Right ventricle myocardium inferior (tissue), 1 donor: ENCODE measurements at regions of chrX and their contacts with region 1.

Region 1: GRCh38 chrX:106894392-106894909 is 8.7 kb downstream of the RIPPLY1 start:
- DNase-seq: no peak
- ATAC-seq: peak; percentile 79

Region 2: GRCh38 chrX:106619797-106620196 is 274.7 kb before region 1 on chrX:
- intact Hi-C with region 1: no loop called
- DNase-seq: no peak
- ATAC-seq: no peak

Region 3: DNA sequence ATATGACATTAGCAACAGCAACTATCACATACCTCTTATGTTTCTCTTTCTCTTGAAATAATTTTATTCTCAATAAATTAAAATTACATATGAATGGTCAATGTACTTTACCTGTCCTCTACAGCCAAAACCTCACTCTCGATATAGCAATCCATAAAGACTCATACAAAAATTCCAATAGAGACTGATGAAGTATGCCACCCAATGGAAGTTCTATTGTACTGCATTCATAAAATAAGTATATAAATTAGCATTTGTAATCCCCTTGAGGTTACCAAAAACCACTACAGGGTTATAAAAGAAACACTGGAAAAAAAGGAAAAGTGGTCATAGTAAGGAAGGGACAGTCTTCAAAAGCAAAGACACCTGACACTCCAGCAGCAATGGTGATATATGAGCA is 58.5 kb after region 1 on chrX:
- intact Hi-C with region 1: loop called (anchors 5 kb)
- DNase-seq: no peak
- ATAC-seq: no peak

Region 4: DNA sequence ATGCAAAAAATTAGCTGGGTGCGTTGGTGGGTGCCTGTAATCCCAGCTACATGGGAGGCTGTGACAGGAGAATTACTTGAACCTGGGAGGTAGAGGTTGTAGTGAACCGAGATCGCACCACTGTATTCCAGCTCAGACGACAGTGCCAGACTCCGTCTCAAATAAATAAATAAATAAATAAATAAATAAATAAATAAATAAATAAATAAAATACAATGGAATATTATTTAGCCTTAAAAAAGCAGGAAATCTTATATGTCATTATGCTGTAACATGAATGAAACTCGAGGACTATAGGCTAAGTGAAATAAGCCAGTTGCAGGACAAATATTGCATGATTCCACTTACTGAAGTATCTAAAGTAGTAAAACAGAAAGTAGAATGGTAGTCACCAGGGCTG is 181.7 kb after region 1 on chrX:
- intact Hi-C with region 1: no loop called
- DNase-seq: no peak
- ATAC-seq: no peak